HEK293 (cell line): ENCODE measurements at regions of chr9 and their contacts with region 1.

Region 1: DNA sequence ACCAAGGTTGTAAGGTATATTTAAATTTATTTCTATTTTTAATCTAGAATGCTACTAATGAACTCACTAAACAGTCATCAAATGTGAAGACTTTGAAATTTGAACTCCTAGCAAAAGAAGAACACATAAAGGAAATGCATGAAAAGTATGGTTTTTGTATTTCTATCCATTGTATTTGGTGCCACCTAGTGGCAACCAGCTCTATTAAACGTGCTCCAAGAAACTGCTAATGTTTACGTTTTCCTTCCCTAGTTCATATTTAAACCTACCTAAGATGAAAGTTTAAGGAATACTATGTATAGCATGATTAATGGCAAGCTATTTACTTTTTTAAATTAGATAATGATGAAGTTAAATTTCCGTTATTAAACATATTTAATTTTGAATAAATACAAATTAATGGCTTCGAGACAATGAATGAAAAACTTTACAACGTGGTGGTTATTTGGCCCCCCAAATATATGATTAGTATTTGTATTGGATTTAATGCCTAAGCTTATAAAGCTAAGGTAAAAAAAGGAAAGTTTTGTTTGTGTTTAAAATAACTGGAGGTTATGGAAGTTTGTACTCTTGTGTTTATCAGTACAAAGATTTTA is 115.9 kb upstream of the SH3GL2 start:
- H3K4me3 ChIP-seq: no peak overlapping the region
- H3K27ac ChIP-seq: no peak overlapping the region
- H3K4me1 ChIP-seq: no peaks in the 10 kb centered on the region
- CTCF ChIP-seq: 0 out of 2 replicates have a peak, but pooled peaks have one; percentile 37

Region 2: DNA sequence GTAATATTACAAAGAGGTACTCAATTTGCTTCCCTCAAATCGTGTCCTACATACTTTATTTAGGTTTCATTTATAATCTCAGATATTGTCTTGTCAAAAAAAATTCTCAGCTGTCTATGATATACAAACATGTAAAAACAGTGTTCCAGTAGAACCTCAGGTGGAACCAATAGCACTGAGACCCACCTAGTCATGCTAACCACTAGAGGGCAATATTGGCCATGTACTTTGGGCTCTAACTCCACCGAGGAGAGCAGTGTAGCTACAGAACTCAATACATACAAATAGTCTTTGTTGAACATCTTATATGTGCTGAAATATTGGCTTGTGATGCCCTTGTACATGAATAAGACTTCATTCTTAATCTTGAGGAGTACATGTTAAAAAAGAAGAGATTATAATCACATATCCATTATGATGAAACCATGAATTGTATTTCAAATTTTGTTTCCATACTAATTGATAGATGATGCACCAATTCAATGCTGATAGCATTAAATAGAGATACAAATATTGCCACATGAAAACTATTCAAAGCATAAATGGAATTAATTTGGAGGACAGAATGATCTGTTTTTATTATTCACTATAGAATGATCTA is 399.3 kb before region 1 on chr9:
- CTCF ChIA-PET with region 1: interaction called, 49 read pairs
- POLR2A ChIA-PET with region 1: no interaction called
- H3K4me3 ChIP-seq: no peak overlapping the region
- H3K27ac ChIP-seq: no peak overlapping the region
- H3K4me1 ChIP-seq: no peaks in the 10 kb centered on the region
- CTCF ChIP-seq: no peak; the same call in 1 of the 2 replicates

Region 3: GRCh38 chr9:17116400-17116837 is 346.5 kb before region 1 on chr9:
- CTCF ChIA-PET with region 1: interaction called, 45 read pairs
- POLR2A ChIA-PET with region 1: no interaction called
- H3K4me3 ChIP-seq: no peak overlapping the region
- H3K27ac ChIP-seq: no peak overlapping the region
- H3K4me1 ChIP-seq: no peaks in the 10 kb centered on the region
- CTCF ChIP-seq: no peak

Region 4: GRCh38 chr9:17219261-17219660 is 243.7 kb before region 1 on chr9:
- CTCF ChIA-PET with region 1: interaction called, 12 read pairs
- POLR2A ChIA-PET with region 1: no interaction called
- H3K4me3 ChIP-seq: no peak overlapping the region
- H3K27ac ChIP-seq: no peak overlapping the region
- H3K4me1 ChIP-seq: no peaks in the 10 kb centered on the region
- CTCF ChIP-seq: no peak

Region 5: DNA sequence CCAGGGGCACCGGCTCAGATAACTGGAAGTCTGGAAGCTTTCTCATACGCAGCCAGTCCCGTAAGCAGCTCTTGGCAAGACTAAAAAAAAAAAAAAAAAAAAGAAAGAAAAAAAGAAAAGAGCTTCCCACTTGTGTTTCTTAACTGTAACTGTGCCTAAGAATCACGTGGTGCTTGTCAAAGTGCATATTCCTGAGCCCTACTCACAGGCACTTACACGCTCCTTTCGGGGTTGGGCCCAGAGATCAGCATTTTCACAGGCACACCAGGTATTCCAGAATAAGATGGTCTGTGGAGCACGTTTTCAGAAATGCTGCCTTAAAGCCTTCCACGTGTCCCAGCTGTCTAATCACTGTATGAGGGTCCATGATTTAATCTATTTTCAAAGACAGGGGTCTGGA is 93.3 kb after region 1 on chr9:
- CTCF ChIA-PET with region 1: no interaction called
- POLR2A ChIA-PET with region 1: no interaction called
- H3K4me3 ChIP-seq: no peak overlapping the region
- H3K27ac ChIP-seq: no peak overlapping the region
- H3K4me1 ChIP-seq: no peaks in the 10 kb centered on the region
- CTCF ChIP-seq: no peak